Heart right ventricle (tissue), 16 donors: ENCODE measurements at regions of chr15 and their contacts with region 1.

Region 1: GRCh38 chr15:63277038-63277892 is at the start of gene APH1B:
- DNase-seq: peak; percentile 80 to 90
- ATAC-seq: peak; percentile 87 to 98 (median 92)
- H3K4me3 ChIP-seq: peak within 1 kb of the TSS; percentile 68 to 93 (median 84)
- H3K27ac ChIP-seq: peak within 1 kb of the TSS; percentile 22 to 92 (median 86)
- H3K4me1 ChIP-seq: peaks cover 0 to 31% (median 9%) of the 10 kb centered on the region in 9 donors
- H3K27me3 ChIP-seq: no peaks in the 10 kb centered on the region
- CTCF ChIP-seq: no peak
- total RNA-seq, gene APH1B: 4.8 to 11.4 (median 8.4) TPM

Region 2: GRCh38 chr15:63157118-63157843 is 120.0 kb before region 1 on chr15 and contains the start of gene RPS27L:
- intact Hi-C with region 1: loop called in 4 of 10 experiments (anchors 5 to 10 kb)
- DNase-seq: peak; percentile 90 to 93
- ATAC-seq: peak; percentile 96 to 99 (median 98)
- H3K4me3 ChIP-seq: peak within 1 kb of the TSS; percentile 56 to 99 (median 82)
- H3K27ac ChIP-seq: peak within 1 kb of the TSS; percentile 87 to 99 (median 97)
- H3K4me1 ChIP-seq: peaks cover 5 to 37% (median 26%) of the 10 kb centered on the region in 9 donors
- H3K27me3 ChIP-seq: no peaks in the 10 kb centered on the region
- CTCF ChIP-seq: no peak
- total RNA-seq, gene RPS27L: 117 to 177 (median 145) TPM

Region 3: GRCh38 chr15:63172376-63173109 is 104.7 kb before region 1 on chr15:
- intact Hi-C with region 1: loop called in 1 of 10 experiments (anchors 10 kb)
- DNase-seq: no peak
- ATAC-seq: no peak
- H3K4me3 ChIP-seq: no peak overlapping the region
- H3K27ac ChIP-seq: no peak overlapping the region
- H3K4me1 ChIP-seq: peaks cover 0 to 5% (median 0%) of the 10 kb centered on the region in 9 donors
- H3K27me3 ChIP-seq: no peaks in the 10 kb centered on the region
- CTCF ChIP-seq: no peak

Region 4: DNA sequence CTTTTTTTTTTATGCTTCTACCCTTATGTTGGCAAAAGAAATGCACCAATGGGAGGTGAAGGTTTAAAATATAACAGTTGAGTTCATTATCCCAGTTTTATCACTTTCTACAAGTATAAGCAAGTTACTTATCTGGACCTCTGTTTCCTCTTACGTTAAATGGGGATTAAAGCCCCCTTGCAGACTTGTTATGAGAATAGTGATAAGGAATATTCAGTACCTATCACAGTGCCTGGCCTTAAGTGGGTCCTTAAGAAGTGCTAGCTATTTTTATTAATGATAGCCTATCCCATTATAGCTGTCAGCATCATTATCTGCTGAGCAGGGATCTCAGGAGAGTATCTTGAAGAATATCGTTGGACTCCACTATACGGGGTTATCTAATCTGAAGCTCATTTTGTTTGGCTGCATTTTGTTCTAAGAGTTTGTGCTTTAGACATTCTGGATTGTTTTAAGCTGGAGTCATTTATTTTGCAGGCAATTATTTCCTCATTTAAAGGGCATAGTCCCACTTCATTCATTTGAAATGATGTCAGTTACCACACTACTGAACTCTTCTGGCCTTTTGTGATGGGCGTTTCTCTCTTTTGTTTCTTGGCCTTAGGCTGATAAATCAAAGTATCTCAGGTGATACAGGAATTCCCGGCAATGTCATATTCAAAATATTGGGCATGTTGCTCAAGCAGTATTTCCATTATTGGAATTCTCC is 59.0 kb before region 1 on chr15:
- intact Hi-C with region 1: no loop called
- DNase-seq: no peak
- ATAC-seq: peak; percentile 42 to 86 (median 64)
- H3K4me3 ChIP-seq: no peak overlapping the region
- H3K27ac ChIP-seq: peak overlapping the region in 4 of 10 donors; percentile 7 to 46 (median 26)
- H3K4me1 ChIP-seq: peaks cover 10 to 75% (median 29%) of the 10 kb centered on the region in 9 donors
- H3K27me3 ChIP-seq: no peaks in the 10 kb centered on the region
- CTCF ChIP-seq: no peak